ENCODE measurements at regions of chr12 and their contacts with region 1.

Region 1: DNA sequence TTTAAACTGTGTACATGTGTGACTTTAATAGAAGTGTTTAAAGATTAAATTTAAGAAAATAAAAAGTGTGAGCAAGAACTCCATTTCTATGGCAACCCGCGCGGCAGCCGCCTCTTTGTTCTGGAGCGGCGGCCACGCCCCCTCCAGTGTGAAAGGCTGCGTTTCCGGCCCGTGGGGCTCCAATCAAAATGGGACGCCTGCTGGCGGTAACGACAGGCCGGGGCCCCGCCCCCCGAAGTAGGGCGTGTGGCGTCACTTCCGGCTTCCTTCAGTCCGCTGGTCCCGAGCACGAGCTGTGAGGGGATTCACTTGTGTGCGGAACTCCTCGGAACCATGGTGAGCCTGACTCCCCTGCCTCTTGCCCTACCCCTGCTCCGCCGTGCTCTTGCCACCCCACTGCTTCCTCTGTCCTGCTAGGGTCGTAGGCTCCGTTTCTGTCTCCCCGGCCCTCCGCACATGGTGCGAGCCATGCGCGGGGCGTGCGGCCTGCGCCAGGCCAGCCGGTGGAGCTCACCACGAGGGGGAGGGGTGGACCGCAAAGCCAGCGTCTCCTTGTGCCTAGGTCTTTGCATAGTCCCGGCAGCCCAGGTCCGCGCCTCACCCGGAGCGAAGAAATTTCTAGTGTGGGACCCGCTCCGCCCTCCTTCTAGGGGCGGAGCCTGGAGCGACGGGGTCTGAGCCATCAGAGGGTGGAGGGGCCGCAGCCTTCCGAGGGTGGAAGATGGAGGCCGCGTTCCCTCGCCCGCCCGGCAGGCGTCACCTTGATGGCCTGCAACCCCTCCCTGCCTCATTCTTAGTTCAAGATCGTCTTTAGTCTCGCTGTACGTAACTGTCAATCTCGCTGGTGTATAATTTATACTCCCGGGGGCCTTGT is at the start of gene CCT2:
- DNase-seq: peak; percentile 97 to 99 (median 98)
- H3K4me3 ChIP-seq: peak within 1 kb of the TSS; percentile 63 to 100 (median 95)
- H3K27ac ChIP-seq: peak within 1 kb of the TSS in 56 of 59 donors; percentile 5 to 96 (median 83)
- H3K27me3 ChIP-seq: no peaks in the 10 kb centered on the region
- CTCF ChIP-seq: peak in 51 of 56 donors; percentile 6 to 66 (median 39)
- total RNA-seq, gene CCT2: 66.9 to 156 (median 104) TPM

Region 2: DNA sequence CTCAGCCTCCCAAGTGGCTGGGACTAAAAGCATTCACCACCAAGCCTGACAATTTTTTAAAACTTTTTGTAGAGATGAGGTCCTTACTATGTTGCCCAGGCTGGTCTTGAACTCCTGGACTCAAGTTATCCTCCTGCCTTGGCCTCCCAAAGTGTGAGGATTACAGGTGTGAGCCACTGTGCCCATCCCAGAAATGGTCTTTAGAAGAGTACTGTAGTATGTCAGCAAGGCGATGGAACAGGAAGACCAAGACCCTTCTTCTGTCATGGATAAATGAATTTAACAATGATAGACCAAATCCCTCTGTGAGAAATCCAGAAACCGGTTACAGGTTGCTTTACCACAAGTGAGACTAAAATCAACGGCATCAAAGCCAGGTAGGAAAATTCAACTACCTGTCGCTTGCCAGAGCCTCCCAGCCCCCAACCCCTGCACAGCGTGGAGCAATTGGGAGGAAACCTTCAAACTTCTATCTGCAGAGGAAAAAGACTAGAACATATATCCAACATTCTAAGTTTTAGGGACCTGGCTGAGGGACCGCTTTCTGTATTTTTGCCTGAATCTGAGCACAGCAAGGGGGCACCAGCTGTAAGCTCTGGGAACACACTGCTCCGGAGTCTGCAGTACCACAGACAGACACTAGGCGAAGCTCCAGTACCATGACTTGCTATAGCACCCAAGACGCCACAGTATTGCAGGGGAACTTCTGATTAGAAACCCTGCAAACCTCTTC is 294.7 kb before region 1 on chr12:
- intact Hi-C with region 1: loop called in 1 of 2 experiments (anchors 10 kb)
- DNase-seq: peak; percentile 18 to 79 (median 66)
- H3K4me3 ChIP-seq: no peak overlapping the region
- H3K27ac ChIP-seq: no peak overlapping the region
- H3K27me3 ChIP-seq: peaks cover 0 to 18% (median 0%) of the 10 kb centered on the region in 45 donors
- CTCF ChIP-seq: peak; percentile 30 to 94 (median 83)

Measured in dorsolateral prefrontal cortex (tissue), 120 donors.